ENCODE measurements at regions of chr20 and their contacts with region 1.

Region 1: GRCh38 chr20:47663333-47664067 is 121.8 kb downstream of the SULF2 start:
- DNase-seq: peak; percentile 76 to 80
- ATAC-seq: peak; percentile 76 to 84
- H3K4me3 ChIP-seq: no peak overlapping the region
- H3K27ac ChIP-seq: peak overlapping the region in 1 of 2 experiments; percentile 64; a peak in 3 of 6 replicates
- H3K4me1 ChIP-seq: peaks cover 4% of the 10 kb centered on the region; the same call in 1 of the 3 replicates
- CTCF ChIP-seq: peak; percentile 87
- EP300 ChIP-seq: no peak
- POLR2A ChIP-seq: no peak
- RAD21 ChIP-seq: peak; percentile 72 to 76

Region 2: DNA sequence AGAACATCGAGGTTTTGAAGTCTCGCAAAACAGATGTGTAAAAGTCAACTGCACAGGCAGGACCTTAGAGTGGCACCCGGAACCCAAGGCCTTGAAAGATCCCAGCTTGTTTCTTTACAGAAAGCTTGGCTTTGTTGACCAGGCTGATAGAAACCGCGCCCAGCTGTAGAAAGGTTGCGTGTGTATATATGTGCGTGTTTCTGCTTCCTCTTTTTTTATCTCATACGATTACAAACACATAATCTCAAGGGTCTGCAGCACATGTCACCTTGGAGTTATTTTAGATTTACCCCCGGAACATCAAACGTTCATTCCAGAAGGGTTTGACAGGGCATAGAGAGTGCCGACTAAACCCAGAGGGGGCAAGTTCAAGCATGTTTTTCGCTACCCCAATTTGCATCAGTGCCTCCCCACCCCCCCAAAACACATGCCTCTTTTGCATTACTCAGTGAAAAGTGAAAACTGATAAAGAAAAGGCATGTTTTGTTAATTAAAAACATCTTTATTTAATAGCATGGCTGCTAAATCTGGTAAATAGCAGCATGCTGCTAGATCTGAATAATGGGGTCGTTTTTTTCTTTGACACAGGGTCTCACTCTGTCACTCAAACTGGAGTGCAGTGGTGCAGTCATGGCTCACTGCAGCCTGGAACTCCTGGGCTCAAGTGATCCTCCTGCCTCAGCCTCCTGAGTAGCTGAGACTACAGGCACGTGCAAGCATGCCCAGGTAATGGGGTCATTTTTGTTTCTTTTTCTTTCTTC is 195.0 kb before region 1 on chr20:
- CTCF ChIA-PET with region 1: no interaction called
- POLR2A ChIA-PET with region 1: no interaction called
- DNase-seq: no peak
- ATAC-seq: no peak
- H3K4me3 ChIP-seq: no peak overlapping the region
- H3K27ac ChIP-seq: peak overlapping the region; percentile 6 to 72; a peak in 5 of 6 replicates
- H3K4me1 ChIP-seq: peaks cover 38% of the 10 kb centered on the region
- CTCF ChIP-seq: no peak
- EP300 ChIP-seq: no peak
- POLR2A ChIP-seq: no peak
- RAD21 ChIP-seq: no peak

Region 3: GRCh38 chr20:47648943-47649342 is 14.6 kb before region 1 on chr20:
- CTCF ChIA-PET with region 1: interaction called, 55 read pairs
- POLR2A ChIA-PET with region 1: no interaction called
- DNase-seq: no peak
- ATAC-seq: no peak
- H3K4me3 ChIP-seq: no peak overlapping the region
- H3K27ac ChIP-seq: no peak overlapping the region
- H3K4me1 ChIP-seq: no peaks in the 10 kb centered on the region
- CTCF ChIP-seq: no peak
- EP300 ChIP-seq: no peak
- POLR2A ChIP-seq: no peak
- RAD21 ChIP-seq: no peak

Region 4: GRCh38 chr20:47691625-47692024 is 28.1 kb after region 1 on chr20:
- CTCF ChIA-PET with region 1: interaction called, 13 read pairs
- POLR2A ChIA-PET with region 1: no interaction called
- DNase-seq: no peak
- ATAC-seq: no peak
- H3K4me3 ChIP-seq: no peak overlapping the region
- H3K27ac ChIP-seq: no peak overlapping the region
- H3K4me1 ChIP-seq: peaks cover 17% of the 10 kb centered on the region
- CTCF ChIP-seq: no peak
- EP300 ChIP-seq: no peak
- POLR2A ChIP-seq: no peak
- RAD21 ChIP-seq: no peak

Region 5: GRCh38 chr20:48295445-48295963 is 632.0 kb after region 1 on chr20:
- CTCF ChIA-PET with region 1: interaction called, 24 read pairs
- POLR2A ChIA-PET with region 1: interaction called, 3 read pairs
- DNase-seq: peak; percentile 80 to 88
- ATAC-seq: peak; percentile 83 to 87
- H3K4me3 ChIP-seq: no peak overlapping the region
- H3K27ac ChIP-seq: peak overlapping the region; percentile 60 to 85
- H3K4me1 ChIP-seq: peaks cover 57% of the 10 kb centered on the region
- CTCF ChIP-seq: peak; percentile 75
- EP300 ChIP-seq: peak in 1 of 2 experiments; percentile 68; a peak in 2 of 5 replicates
- POLR2A ChIP-seq: no peak
- RAD21 ChIP-seq: peak; percentile 93